ENCODE measurements at regions of chr1 and their contacts with region 1.

Region 1: DNA sequence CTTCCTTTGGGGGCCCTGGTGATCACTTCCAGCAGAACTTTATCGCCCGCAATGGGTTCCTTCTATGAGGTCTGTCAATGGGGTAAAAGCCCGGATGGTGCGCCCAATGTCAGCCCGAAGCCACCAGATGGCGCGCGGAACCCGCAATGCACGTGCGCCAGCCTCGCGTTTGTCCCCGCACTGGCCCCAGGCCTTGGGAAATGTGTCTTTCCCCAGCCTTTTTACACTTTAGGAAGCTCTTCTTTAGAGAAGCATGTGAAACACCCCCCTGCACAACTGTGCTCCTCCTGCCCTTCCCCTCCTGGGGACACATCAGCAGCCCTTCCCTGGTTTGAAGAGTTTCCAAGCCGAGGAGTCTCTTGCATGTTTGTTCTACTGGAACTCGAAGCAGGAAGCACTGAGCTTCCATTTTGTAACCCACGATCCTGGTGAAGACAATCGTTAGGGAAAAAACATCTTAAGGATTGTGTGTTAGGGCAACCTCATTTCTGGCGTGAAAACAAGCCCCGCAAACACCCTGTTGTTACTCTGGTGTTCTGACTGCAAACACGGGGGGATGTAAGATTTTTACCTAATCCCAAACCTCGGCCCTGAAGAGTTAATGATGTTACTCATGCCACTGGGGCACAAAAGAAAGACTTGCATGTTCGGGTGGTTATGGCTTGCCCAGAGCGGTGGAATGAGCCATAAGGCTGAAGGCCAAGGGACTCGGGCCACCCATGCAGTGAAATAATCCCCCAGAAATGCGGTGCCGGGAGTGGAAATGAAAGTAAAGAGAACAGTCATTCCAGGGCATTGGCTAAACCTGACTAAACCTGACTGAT is 20.4 kb upstream of the TARBP1 start:
- H3K4me3 ChIP-seq: no peak overlapping the region
- H3K27ac ChIP-seq: peak overlapping the region; percentile 42
- H3K4me1 ChIP-seq: peaks cover 15% of the 10 kb centered on the region
- CTCF ChIP-seq: peak; percentile 98

Region 2: GRCh38 chr1:234509452-234510328 is 10.4 kb after region 1 on chr1:
- CTCF ChIA-PET with region 1: interaction called, 39 read pairs
- POLR2A ChIA-PET with region 1: no interaction called
- H3K4me3 ChIP-seq: no peak overlapping the region
- H3K27ac ChIP-seq: peak overlapping the region; percentile 55
- H3K4me1 ChIP-seq: 0 out of 2 replicates have a peak, but pooled peaks cover 5% of the 10 kb centered on the region
- CTCF ChIP-seq: no peak; the same call in 1 of the 2 replicates

Region 3: DNA sequence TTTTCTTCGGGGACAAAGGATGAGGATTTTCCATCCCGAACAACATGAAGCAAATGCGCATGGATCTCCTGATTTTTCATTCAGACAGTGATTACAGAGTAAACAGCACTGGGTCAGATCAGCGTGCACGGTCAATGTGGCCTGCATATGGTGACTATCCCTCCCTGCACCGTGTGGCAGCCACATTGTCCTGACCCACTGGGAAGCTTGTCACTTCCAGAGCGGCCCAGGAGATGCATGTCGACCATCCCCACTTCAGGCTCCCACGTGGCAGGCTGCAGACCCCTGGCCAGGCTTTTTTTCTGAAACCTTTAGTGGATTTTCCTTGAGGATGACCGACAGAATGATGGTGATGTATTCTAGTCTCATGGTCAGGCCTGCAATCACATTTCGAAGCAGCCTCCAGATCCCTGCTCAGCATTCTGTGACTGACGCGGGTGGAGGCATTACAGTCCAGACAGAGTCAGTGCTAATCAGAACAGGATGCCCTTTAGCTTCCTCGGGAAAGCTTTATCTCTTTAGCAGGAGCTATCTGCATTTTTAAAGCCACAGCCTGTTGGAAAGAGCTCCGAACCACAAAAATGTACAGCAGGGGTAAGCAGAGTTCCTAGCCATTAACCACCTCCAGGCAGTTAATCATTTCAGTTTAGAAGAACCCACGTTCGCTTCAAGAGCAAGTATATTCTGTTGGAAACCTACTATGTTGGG is 54.0 kb after region 1 on chr1:
- CTCF ChIA-PET with region 1: interaction called, 10 read pairs
- POLR2A ChIA-PET with region 1: interaction called, 3 read pairs
- H3K4me3 ChIP-seq: no peak overlapping the region
- H3K27ac ChIP-seq: no peak overlapping the region; the same call in 1 of the 2 replicates
- H3K4me1 ChIP-seq: peaks cover 10% of the 10 kb centered on the region
- CTCF ChIP-seq: no peak

Region 4: DNA sequence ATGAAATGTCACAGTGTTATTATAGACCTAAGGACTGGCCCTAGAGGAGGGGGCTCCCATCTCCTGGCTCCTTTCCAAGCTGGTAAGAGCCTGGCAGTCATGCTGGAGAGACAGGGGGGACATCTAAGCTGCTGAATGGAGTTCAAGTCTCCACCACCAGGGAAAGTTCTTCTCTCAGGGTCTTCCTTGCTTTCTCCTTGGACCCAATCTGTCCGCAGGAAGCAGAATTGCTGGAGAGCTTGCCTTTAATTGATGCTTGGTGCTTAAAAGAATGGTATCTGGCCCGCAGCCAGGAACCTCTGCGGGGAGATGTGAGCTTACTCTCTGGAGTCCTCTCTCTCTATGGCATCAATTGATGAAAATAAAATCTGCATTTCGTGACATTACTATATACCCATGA is 85.6 kb after region 1 on chr1:
- CTCF ChIA-PET with region 1: interaction called, 10 read pairs
- POLR2A ChIA-PET with region 1: interaction called, 3 read pairs
- H3K4me3 ChIP-seq: no peak overlapping the region
- H3K27ac ChIP-seq: no peak overlapping the region
- H3K4me1 ChIP-seq: peaks cover 7% of the 10 kb centered on the region; the same call in 1 of the 2 replicates
- CTCF ChIP-seq: no peak

Region 5: DNA sequence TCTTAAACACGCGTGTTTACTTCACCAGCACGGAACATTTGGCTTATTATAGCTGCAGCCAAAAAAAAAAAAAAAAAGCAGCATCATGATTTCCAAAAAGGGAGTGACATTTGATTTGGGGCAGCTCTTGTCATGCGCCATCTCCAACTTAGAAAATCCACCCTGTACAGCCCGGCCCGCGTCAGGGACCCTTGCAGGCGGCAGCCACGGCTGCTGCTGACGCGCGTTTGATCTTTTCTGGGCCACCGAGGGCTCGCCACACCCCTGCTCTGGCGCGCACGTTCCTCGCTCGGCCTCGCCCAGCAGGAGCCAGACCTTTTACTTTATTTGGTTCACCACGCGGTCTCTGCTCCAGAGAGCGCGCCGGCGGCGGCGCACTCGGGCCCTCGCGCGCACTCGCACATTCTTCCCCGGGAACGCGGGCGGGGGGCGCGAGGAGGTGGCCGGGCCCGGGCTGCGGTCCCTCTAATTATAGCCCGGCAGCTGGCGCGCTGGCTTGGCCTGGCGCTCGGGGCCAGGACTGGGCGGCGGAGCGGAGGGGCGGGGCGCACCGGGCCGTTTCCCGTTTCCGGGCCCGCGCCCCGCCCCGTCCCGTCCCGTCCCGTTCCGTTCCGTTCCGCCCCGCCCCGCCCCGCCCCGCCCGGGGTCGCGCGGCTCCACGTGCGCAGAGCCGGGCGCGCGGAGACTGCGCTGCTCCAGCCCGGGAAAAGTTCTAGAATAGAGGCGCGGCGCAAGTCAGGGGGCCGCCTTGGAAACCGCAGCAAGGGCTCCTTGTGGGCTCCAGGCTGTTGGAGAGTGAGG is 100.5 kb after region 1 on chr1:
- CTCF ChIA-PET with region 1: interaction called, 46 read pairs
- POLR2A ChIA-PET with region 1: interaction called, 23 read pairs
- H3K4me3 ChIP-seq: peak overlapping the region; percentile 45
- H3K27ac ChIP-seq: peak overlapping the region; percentile 96
- H3K4me1 ChIP-seq: peaks cover 52% of the 10 kb centered on the region
- CTCF ChIP-seq: peak; percentile 60; the same call in 1 of the 2 replicates

Measured in HEK293 (cell line).